Dorsolateral prefrontal cortex (tissue), 120 donors: ENCODE measurements at regions of chr11 and their contacts with region 1.

Region 1: GRCh38 chr11:75142714-75143419 is 8.0 kb upstream of the SLCO2B1 start:
- DNase-seq: peak; percentile 36 to 93 (median 79)
- H3K4me3 ChIP-seq: no peak overlapping the region
- H3K27ac ChIP-seq: peak overlapping the region in 54 of 59 donors; percentile 6 to 86 (median 71)
- H3K27me3 ChIP-seq: peaks cover 0 to 7% (median 0%) of the 10 kb centered on the region in 45 donors
- CTCF ChIP-seq: peak in 12 of 56 donors; percentile 5 to 28 (median 14)

Region 2: GRCh38 chr11:74929431-74930363 is 213.2 kb before region 1 on chr11:
- intact Hi-C with region 1: loop called in 1 of 2 experiments (anchors 5 kb)
- DNase-seq: peak; percentile 24 to 90 (median 58)
- H3K4me3 ChIP-seq: no peak overlapping the region
- H3K27ac ChIP-seq: peak overlapping the region in 1 of 59 donors; percentile 44
- H3K27me3 ChIP-seq: no peaks in the 10 kb centered on the region
- CTCF ChIP-seq: peak; percentile 62 to 96 (median 90)

Region 3: GRCh38 chr11:75022759-75023396 is 120.0 kb before region 1 on chr11:
- intact Hi-C with region 1: loop called (anchors 5 kb)
- DNase-seq: peak; percentile 78 to 91 (median 87)
- H3K4me3 ChIP-seq: no peak overlapping the region
- H3K27ac ChIP-seq: peak overlapping the region in 58 of 59 donors; percentile 47 to 95 (median 87)
- H3K27me3 ChIP-seq: no peaks in the 10 kb centered on the region
- CTCF ChIP-seq: peak; percentile 93 to 100 (median 99)

Region 4: GRCh38 chr11:75182669-75183068 is 39.8 kb after region 1 on chr11:
- intact Hi-C with region 1: no loop called
- DNase-seq: no peak
- H3K4me3 ChIP-seq: no peak overlapping the region
- H3K27ac ChIP-seq: peak overlapping the region in 6 of 59 donors; percentile 26 to 64 (median 52)
- H3K27me3 ChIP-seq: no peaks in the 10 kb centered on the region
- CTCF ChIP-seq: no peak

Region 5: DNA sequence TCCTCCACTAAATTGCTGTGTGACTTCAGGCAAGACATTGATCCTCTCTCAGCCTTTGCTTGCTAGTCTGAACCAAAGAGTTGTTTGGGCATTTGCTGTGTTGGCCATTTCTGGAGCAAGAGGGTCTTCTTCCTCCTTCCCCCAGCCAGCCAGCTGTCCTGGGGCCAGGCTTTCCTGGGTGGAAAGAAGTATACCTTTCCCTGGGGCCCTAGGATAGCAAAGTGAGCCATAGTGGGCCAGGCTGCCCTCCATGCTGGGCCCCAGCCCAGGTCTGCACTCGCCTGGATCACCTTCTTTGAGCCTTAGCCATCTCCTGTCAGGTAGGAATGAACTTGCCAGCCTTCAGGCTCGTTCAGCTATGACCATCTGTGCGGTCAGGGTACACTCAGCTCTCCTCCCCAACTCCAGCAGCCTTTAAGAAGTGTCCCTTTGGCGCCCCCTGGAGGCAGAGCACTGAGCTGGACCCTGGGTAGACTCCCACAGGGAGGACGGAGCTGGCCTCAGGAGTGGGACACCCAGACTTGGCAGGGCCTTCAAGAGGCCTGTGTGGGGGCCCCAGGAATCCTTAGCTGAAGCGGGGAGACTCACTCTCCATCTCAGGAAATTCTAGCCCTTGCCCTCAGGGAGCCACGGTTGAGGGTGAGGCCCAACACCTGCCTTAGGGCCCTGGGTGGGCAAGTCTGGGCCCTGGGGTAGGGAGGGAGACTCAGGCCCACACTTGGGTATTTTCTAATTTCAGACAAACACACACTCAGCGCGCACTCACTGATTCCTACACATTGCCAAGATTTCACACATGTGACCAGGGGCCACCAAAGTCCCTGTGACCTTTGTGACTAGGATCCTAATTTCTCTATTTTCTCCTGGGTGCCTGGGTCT is 62.1 kb after region 1 on chr11:
- intact Hi-C with region 1: loop called (anchors 2 to 5 kb)
- DNase-seq: peak; percentile 72 to 90 (median 80)
- H3K4me3 ChIP-seq: no peak overlapping the region
- H3K27ac ChIP-seq: peak overlapping the region in 12 of 59 donors; percentile 0 to 53 (median 20)
- H3K27me3 ChIP-seq: no peaks in the 10 kb centered on the region
- CTCF ChIP-seq: peak; percentile 44 to 90 (median 80)

Region 6: DNA sequence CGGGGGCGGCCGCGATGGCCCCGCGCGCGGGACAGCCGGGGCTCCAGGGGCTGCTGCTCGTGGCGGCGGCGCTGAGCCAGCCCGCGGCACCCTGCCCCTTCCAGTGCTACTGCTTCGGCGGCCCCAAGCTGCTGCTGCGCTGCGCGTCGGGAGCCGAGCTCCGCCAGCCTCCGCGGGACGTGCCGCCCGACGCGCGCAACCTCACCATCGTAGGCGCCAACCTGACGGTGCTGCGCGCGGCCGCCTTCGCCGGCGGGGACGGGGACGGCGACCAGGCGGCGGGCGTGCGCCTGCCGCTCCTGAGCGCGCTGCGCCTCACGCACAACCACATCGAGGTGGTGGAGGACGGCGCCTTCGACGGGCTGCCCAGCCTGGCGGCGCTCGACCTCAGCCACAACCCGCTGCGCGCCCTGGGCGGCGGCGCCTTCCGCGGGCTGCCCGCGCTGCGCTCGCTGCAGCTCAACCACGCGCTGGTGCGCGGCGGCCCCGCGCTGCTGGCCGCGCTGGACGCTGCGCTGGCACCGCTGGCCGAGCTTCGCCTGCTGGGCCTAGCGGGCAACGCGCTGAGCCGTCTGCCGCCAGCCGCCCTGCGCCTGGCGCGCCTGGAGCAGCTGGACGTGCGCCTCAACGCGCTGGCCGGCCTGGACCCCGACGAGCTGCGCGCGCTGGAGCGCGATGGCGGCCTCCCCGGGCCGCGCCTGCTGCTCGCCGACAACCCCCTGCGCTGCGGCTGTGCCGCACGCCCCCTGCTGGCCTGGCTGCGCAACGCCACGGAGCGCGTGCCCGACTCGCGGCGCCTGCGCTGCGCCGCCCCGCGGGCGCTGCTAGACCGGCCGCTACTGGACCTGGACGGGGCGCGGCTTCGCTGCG is 98.4 kb after region 1 on chr11:
- intact Hi-C with region 1: loop called in 1 of 2 experiments (anchors 2 kb)
- DNase-seq: peak; percentile 45 to 87 (median 66)
- H3K4me3 ChIP-seq: peak overlapping the region; percentile 30 to 72 (median 54)
- H3K27ac ChIP-seq: peak overlapping the region in 24 of 59 donors; percentile 17 to 78 (median 52)
- H3K27me3 ChIP-seq: peaks cover 0 to 17% (median 0%) of the 10 kb centered on the region in 45 donors
- CTCF ChIP-seq: peak in 55 of 56 donors; percentile 19 to 98 (median 78)

Region 7: GRCh38 chr11:75248690-75249268 is 105.9 kb after region 1 on chr11:
- intact Hi-C with region 1: loop called in 1 of 2 experiments (anchors 1 kb)
- DNase-seq: peak; percentile 69 to 89 (median 84)
- H3K4me3 ChIP-seq: peak overlapping the region in 5 of 59 donors; percentile 3 to 32 (median 20)
- H3K27ac ChIP-seq: no peak overlapping the region
- H3K27me3 ChIP-seq: peaks cover 0 to 5% (median 0%) of the 10 kb centered on the region in 45 donors
- CTCF ChIP-seq: peak; percentile 91 to 100 (median 100)